WTC11 (cell line): ENCODE measurements at regions of chr14 and their contacts with region 1.

Region 1: DNA sequence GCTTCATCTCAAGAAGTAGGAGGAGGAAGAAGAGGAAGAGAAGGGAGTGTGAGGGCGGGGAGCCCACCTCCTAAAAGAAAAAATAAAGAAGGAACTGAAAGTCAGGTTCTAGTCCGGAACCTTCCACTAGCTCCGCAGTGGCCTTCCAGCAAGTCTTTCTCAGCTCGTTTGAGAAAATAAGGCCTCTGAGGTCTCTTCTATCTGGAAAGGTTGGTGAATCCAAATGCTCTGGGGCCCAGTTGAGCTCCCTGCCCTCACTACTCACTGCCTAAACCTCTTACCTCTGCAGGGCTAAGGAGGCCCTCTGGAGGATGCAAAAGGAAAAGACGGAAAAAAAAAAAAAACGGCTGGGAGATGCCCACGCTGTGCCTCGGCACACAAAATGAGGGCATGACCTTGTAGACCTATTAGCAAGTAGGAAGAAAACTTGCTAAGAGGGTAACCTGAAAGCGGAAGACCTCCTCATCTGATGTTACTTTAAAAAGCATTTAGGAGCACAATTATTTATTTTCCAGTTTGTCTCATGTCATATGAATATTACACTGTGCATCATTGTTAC is 35.9 kb downstream of the FBLN5 start:
- DNase-seq: peak; percentile 34
- ATAC-seq: peak; percentile 100
- H3K4me3 Mint-ChIP-seq: no peak overlapping the region
- H3K27ac Mint-ChIP-seq: no peak overlapping the region
- H3K4me1 Mint-ChIP-seq: peaks cover 7% of the 10 kb centered on the region
- H3K27me3 Mint-ChIP-seq: no peaks in the 10 kb centered on the region; the same call in 1 of the 2 replicates
- CTCF ChIP-seq: no peak

Region 2: GRCh38 chr14:91649930-91650329 is 261.6 kb before region 1 on chr14:
- CTCF ChIA-PET with region 1: interaction called, 16 read pairs
- POLR2A ChIA-PET with region 1: interaction called, 3 read pairs
- DNase-seq: no peak
- ATAC-seq: 0 out of 2 replicates have a peak, but pooled peaks have one; percentile 38
- H3K4me3 Mint-ChIP-seq: no peak overlapping the region
- H3K27ac Mint-ChIP-seq: no peak overlapping the region
- H3K4me1 Mint-ChIP-seq: peaks cover 6% of the 10 kb centered on the region
- H3K27me3 Mint-ChIP-seq: no peaks in the 10 kb centered on the region; the same call in 1 of the 2 replicates
- CTCF ChIP-seq: peak; percentile 25; the same call in 1 of the 2 replicates

Region 3: GRCh38 chr14:91858215-91858905 is 53.2 kb before region 1 on chr14:
- CTCF ChIA-PET with region 1: interaction called, 21 read pairs
- POLR2A ChIA-PET with region 1: no interaction called
- DNase-seq: no peak
- ATAC-seq: no peak
- H3K4me3 Mint-ChIP-seq: no peak overlapping the region
- H3K27ac Mint-ChIP-seq: no peak overlapping the region
- H3K4me1 Mint-ChIP-seq: peaks cover 29% of the 10 kb centered on the region
- H3K27me3 Mint-ChIP-seq: no peaks in the 10 kb centered on the region; the same call in 1 of the 2 replicates
- CTCF ChIP-seq: no peak

Region 4: DNA sequence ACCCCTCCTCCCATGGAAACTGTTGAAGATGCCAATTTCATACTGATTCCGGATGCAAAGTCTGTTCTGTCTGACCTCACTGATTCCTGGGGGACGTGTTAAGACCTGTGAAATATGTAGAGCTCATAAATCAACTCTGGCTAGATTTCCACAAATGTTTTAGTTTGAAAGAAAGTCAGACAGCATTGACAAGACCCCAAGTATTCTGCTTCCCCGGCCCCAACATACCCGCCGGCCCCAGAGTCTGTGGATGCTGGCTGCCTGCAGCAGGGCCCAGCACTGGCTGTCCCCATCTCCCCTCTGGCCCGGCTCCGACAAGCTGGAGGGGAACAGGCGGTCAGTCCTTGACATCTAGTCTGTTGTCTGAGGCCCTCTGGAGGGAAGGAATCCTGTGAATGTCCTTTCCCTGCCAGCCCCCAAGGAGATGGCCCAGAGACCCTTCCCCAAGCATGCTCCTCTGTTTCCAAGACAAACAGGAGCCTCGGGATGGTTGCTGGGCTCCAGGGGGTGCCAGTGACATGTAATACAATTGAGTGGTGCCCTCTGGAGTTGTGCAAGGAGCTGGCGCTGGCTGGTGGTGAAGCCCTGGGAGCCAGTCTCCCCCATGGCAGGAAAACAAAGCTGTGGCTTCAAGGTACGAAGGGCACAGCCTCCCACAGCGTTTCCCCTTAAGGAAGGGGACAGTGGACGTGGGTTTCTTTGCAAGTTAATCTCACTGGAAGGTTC is 13.6 kb after region 1 on chr14:
- CTCF ChIA-PET with region 1: interaction called, 11 read pairs
- POLR2A ChIA-PET with region 1: no interaction called
- DNase-seq: peak; percentile 15
- ATAC-seq: peak; percentile 50
- H3K4me3 Mint-ChIP-seq: no peak overlapping the region
- H3K27ac Mint-ChIP-seq: no peak overlapping the region
- H3K4me1 Mint-ChIP-seq: peaks cover 5% of the 10 kb centered on the region
- H3K27me3 Mint-ChIP-seq: no peaks in the 10 kb centered on the region
- CTCF ChIP-seq: no peak

Region 5: GRCh38 chr14:91996948-91997371 is 85.4 kb after region 1 on chr14:
- CTCF ChIA-PET with region 1: interaction called, 18 read pairs
- POLR2A ChIA-PET with region 1: no interaction called
- DNase-seq: no peak
- ATAC-seq: peak; percentile 56; the same call in 1 of the 2 replicates
- H3K4me3 Mint-ChIP-seq: no peak overlapping the region
- H3K27ac Mint-ChIP-seq: no peak overlapping the region
- H3K4me1 Mint-ChIP-seq: peaks cover 3% of the 10 kb centered on the region; the same call in 1 of the 2 replicates
- H3K27me3 Mint-ChIP-seq: no peaks in the 10 kb centered on the region
- CTCF ChIP-seq: no peak

Region 6: DNA sequence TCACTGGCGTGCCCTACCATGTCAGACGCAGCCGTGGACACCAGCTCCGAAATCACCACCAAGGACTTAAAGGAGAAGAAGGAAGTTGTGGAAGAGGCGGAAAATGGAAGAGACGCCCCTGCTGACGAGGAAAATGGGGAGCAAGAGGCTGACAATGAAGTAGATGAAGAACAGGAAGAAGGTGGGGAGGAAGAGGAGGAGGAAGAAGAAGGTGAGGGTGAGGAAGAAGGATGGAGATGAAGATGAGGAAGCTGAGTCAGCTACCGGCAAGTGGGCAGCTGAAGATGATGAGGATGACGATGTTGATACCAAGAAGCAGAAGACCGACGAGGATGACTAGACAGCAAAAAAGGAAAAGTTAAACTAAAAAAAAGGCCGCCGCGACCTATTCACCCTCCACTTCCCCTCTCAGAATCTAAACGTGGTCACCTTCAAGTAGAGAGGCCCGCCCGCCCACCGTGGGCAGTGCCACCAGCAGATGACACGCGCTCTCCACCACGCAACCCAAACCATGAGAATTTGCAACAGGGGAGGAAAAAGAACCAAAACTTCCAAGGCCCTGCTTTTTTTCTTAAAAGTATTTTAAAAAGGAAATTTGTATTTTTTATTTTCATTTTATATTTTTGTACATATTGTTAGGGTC is 115.1 kb after region 1 on chr14:
- CTCF ChIA-PET with region 1: no interaction called
- POLR2A ChIA-PET with region 1: no interaction called
- DNase-seq: no peak
- ATAC-seq: no peak
- H3K4me3 Mint-ChIP-seq: no peak overlapping the region
- H3K27ac Mint-ChIP-seq: peak overlapping the region; percentile 23; the same call in 1 of the 2 replicates
- H3K4me1 Mint-ChIP-seq: no peaks in the 10 kb centered on the region
- H3K27me3 Mint-ChIP-seq: no peaks in the 10 kb centered on the region
- CTCF ChIP-seq: no peak